ENCODE measurements at regions of chr16 and their contacts with region 1.

Region 1: GRCh38 chr16:57600048-57600835 is 28.2 kb upstream of the ADGRG1 start:
- DNase-seq: peak; percentile 45
- H3K4me3 ChIP-seq: no peak overlapping the region
- H3K27ac ChIP-seq: no peak overlapping the region
- H3K4me1 ChIP-seq: no peaks in the 10 kb centered on the region
- H3K27me3 ChIP-seq: no peaks in the 10 kb centered on the region
- CTCF ChIP-seq: peak; percentile 70 to 90
- POLR2A ChIP-seq: no peak

Region 2: GRCh38 chr16:57284208-57284951 is 315.9 kb before region 1 on chr16 and contains the start of gene PLLP:
- CTCF ChIA-PET with region 1: no interaction called
- POLR2A ChIA-PET with region 1: no interaction called
- dilution Hi-C with region 1: no loop called
- intact Hi-C with region 1: no loop called
- DNase-seq: peak; percentile 38
- H3K4me3 ChIP-seq: peak within 1 kb of the TSS; percentile 8 to 38 (median 16)
- H3K27ac ChIP-seq: no peak within 1 kb of the TSS
- H3K4me1 ChIP-seq: peaks cover 18% of the 10 kb centered on the region
- H3K27me3 ChIP-seq: no peaks in the 10 kb centered on the region
- CTCF ChIP-seq: no peak
- POLR2A ChIP-seq: no peak
- total RNA-seq, gene PLLP: 3.1 and 4.4 TPM in 2 replicates

Region 3: GRCh38 chr16:57628008-57628781 is 28.0 kb after region 1 on chr16 and contains the start of gene ADGRG1:
- CTCF ChIA-PET with region 1: interaction called, 14 read pairs
- POLR2A ChIA-PET with region 1: no interaction called
- dilution Hi-C with region 1: no loop called
- intact Hi-C with region 1: no loop called
- DNase-seq: peak; percentile 95
- H3K4me3 ChIP-seq: peak within 1 kb of the TSS; percentile 7 to 48 (median 45)
- H3K27ac ChIP-seq: peak within 1 kb of the TSS; percentile 88
- H3K4me1 ChIP-seq: peaks cover 43% of the 10 kb centered on the region
- H3K27me3 ChIP-seq: no peaks in the 10 kb centered on the region
- CTCF ChIP-seq: peak in 1 of 2 donors; percentile 13
- POLR2A ChIP-seq: no peak
- total RNA-seq, gene ADGRG1: 92.5 and 116 TPM in 2 replicates

Region 4: GRCh38 chr16:57639172-57639887 is 39.1 kb after region 1 on chr16:
- CTCF ChIA-PET with region 1: interaction called, 24 read pairs
- POLR2A ChIA-PET with region 1: no interaction called
- dilution Hi-C with region 1: no loop called
- intact Hi-C with region 1: no loop called
- DNase-seq: no peak
- H3K4me3 ChIP-seq: no peak overlapping the region
- H3K27ac ChIP-seq: no peak overlapping the region
- H3K4me1 ChIP-seq: peaks cover 36% of the 10 kb centered on the region
- H3K27me3 ChIP-seq: no peaks in the 10 kb centered on the region
- CTCF ChIP-seq: no peak
- POLR2A ChIP-seq: no peak

Region 5: DNA sequence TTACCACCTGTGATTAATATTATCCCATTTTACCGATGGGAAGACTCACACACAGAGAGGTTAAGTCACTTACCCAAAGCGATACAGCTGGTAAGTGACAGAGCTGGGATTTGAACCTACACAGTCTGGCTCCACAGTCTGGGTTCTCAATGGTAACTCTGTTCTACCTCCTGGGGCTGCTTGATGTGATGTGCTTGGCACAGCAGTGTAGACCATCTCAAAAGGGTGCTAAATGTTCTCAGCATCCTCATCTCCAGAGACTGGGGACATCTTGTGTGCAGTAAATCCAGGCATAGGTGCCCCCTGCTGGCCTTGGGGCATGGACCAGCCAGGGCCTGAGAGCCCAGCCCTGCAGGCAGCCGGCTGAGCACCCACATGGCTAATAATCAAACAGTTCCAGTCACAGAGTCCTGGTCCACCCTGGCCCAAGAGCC is 119.9 kb after region 1 on chr16:
- CTCF ChIA-PET with region 1: interaction called, 3 read pairs
- POLR2A ChIA-PET with region 1: no interaction called
- dilution Hi-C with region 1: no loop called
- intact Hi-C with region 1: loop called (anchors 2 kb)
- DNase-seq: peak; percentile 53
- H3K4me3 ChIP-seq: no peak overlapping the region
- H3K27ac ChIP-seq: no peak overlapping the region
- H3K4me1 ChIP-seq: no peaks in the 10 kb centered on the region
- H3K27me3 ChIP-seq: peaks cover 0 to 6% of the 10 kb centered on the region in 2 experiments
- CTCF ChIP-seq: peak; percentile 70 to 83
- POLR2A ChIP-seq: no peak

Measured in endothelial cell of umbilical vein (primary cell).